Activated CD4-positive, alpha-beta memory T cell treated with anti-CD3 and anti-CD28 coated beads, Interleukin-2, amount 10 ng/mL, durations not matched to agents 7 days and 5 days (primary cell): ENCODE measurements at regions of chr14 and their contacts with region 1.

Region 1: GRCh38 chr14:67599698-67600561 is at the start of gene PIGH:
- DNase-seq: peak; percentile 95
- H3K4me3 Mint-ChIP-seq: peak within 1 kb of the TSS; percentile 94
- H3K27ac Mint-ChIP-seq: peak within 1 kb of the TSS; percentile 80
- H3K4me1 Mint-ChIP-seq: peaks cover 33% of the 10 kb centered on the region
- H3K27me3 Mint-ChIP-seq: peaks cover 2% of the 10 kb centered on the region
- total RNA-seq, gene PIGH: 15.7 to 16.4 TPM

Region 2: GRCh38 chr14:67426983-67427606 is 172.8 kb before region 1 on chr14:
- CTCF ChIA-PET with region 1: interaction called, 22 read pairs
- POLR2A ChIA-PET with region 1: interaction called, 6 read pairs
- DNase-seq: peak; percentile 76
- H3K4me3 Mint-ChIP-seq: no peak overlapping the region
- H3K27ac Mint-ChIP-seq: no peak overlapping the region
- H3K4me1 Mint-ChIP-seq: peaks cover 5% of the 10 kb centered on the region
- H3K27me3 Mint-ChIP-seq: peaks cover 37% of the 10 kb centered on the region

Region 3: DNA sequence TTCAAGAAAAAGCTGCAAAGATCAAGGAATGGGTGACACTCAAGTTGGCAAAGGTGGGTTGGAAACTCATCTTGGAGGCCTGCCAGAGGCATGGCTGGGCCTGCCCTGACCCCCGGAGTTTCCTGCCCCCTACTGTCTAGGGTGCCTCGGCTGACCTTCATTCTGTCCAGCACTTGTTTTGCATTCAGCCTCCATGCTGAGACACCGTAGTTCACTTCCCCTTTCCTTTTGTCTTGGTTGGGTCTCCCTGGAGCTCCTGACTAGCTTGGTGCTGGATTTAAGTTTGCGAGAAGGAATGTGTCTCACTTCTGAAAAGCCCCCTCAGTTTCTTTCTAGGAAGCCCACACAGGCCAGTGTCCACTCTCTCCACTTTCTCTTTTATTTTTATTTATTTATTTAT is 40.3 kb before region 1 on chr14:
- CTCF ChIA-PET with region 1: no interaction called
- POLR2A ChIA-PET with region 1: no interaction called
- DNase-seq: no peak
- H3K4me3 Mint-ChIP-seq: no peak overlapping the region
- H3K27ac Mint-ChIP-seq: no peak overlapping the region
- H3K4me1 Mint-ChIP-seq: no peaks in the 10 kb centered on the region
- H3K27me3 Mint-ChIP-seq: peaks cover 10% of the 10 kb centered on the region

Region 4: DNA sequence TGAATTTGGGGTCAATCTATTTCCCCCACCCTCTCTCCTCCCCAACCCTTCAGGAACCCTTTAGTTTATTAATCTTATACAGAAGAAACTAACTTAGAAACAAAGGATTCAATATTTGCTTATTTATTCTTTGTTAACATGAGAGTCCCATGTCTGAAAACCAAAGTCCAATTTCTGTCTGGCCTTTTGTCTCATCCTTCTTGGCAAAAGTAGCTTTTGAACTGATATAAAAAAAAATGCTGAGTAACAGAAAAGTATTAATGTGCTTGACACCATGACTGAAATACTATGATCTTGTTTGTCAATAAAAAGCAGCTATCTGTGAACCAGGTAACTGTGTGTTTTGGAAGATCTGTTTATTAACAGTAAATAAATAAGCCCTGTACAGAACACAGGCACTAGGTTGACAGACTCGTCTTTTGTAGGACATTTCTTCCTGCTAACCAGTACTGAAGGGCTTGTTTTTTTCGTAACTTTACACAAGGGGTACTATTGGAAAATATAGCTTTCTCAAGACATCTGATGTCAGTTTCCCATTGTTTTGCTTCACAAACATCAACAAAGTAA is 10.6 kb before region 1 on chr14:
- CTCF ChIA-PET with region 1: interaction called, 19 read pairs
- POLR2A ChIA-PET with region 1: interaction called, 5 read pairs
- DNase-seq: no peak
- H3K4me3 Mint-ChIP-seq: no peak overlapping the region
- H3K27ac Mint-ChIP-seq: no peak overlapping the region
- H3K4me1 Mint-ChIP-seq: no peaks in the 10 kb centered on the region
- H3K27me3 Mint-ChIP-seq: no peaks in the 10 kb centered on the region

Region 5: DNA sequence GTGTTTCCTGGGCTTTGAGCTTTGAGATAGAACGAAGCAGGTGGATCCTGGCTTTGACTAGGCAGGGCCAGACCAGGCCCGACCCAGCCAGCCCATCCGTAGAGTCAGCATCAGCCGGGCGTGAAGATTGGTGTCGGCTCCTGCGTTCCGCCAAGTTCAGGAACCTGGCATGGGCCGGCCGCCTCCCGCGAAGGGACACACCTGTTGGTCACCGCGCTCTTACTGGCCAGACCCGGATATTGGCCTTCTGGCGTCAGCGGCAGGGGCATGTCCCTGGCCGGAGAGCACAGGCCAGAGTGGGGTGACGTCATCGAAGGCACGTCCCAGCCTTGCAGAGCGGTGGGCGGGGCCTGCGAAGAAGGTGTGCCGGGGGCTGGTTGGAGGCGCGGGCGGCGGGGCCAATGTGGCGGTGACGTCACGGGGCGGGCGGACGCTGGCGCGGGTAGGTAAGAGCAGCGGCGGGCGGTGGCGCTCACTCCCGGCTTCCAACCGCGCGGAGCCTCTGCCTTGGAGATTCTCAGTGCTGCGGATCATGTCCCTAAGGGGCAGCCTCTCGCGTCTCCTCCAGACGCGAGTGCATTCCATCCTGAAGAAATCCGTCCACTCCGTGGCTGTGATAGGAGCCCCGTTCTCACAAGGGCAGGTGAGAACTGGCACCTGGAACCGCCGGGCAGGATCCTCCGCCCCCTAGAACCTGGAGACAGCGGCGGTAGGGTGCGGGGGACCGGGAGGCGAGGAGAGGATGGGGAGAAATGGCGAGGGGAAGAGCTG is 19.7 kb after region 1 on chr14 and contains the start of gene ARG2:
- CTCF ChIA-PET with region 1: interaction called, 35 read pairs
- POLR2A ChIA-PET with region 1: interaction called, 17 read pairs
- DNase-seq: peak; percentile 96
- H3K4me3 Mint-ChIP-seq: peak within 1 kb of the TSS; percentile 78
- H3K27ac Mint-ChIP-seq: peak within 1 kb of the TSS; percentile 59
- H3K4me1 Mint-ChIP-seq: peaks cover 32% of the 10 kb centered on the region
- H3K27me3 Mint-ChIP-seq: peaks cover 17% of the 10 kb centered on the region
- total RNA-seq, gene ARG2: 6.8 to 7.7 TPM